CD8-positive, alpha-beta memory T cell (primary cell): ENCODE measurements at regions of chr22 and their contacts with region 1.

Region 1: GRCh38 chr22:17501679-17502285 is 61.5 kb upstream of the SLC25A18 start:
- DNase-seq: peak in 2 of 5 donors; percentile 47 to 61
- H3K4me3 ChIP-seq: no peak overlapping the region
- H3K4me3 Mint-ChIP-seq: no peak overlapping the region
- H3K27ac ChIP-seq: no peak overlapping the region
- H3K27ac Mint-ChIP-seq: no peak overlapping the region
- H3K4me1 ChIP-seq: no peaks in the 10 kb centered on the region
- H3K4me1 Mint-ChIP-seq: no peaks in the 10 kb centered on the region
- H3K27me3 ChIP-seq: no peaks in the 10 kb centered on the region
- H3K27me3 Mint-ChIP-seq: peaks cover 4 to 12% of the 10 kb centered on the region in 2 donors

Region 2: GRCh38 chr22:17077255-17077654 is 424.5 kb before region 1 on chr22:
- CTCF ChIA-PET with region 1: interaction called, 35 read pairs
- POLR2A ChIA-PET with region 1: no interaction called
- DNase-seq: no peak
- H3K4me3 ChIP-seq: no peak overlapping the region
- H3K4me3 Mint-ChIP-seq: no peak overlapping the region
- H3K27ac ChIP-seq: no peak overlapping the region
- H3K27ac Mint-ChIP-seq: no peak overlapping the region
- H3K4me1 ChIP-seq: peaks cover 7% of the 10 kb centered on the region
- H3K4me1 Mint-ChIP-seq: peaks cover 6 to 12% (median 12%) of the 10 kb centered on the region in 3 donors
- H3K27me3 ChIP-seq: no peaks in the 10 kb centered on the region
- H3K27me3 Mint-ChIP-seq: peaks cover 0 to 4% of the 10 kb centered on the region in 2 donors

Region 3: GRCh38 chr22:17213976-17214375 is 287.8 kb before region 1 on chr22:
- CTCF ChIA-PET with region 1: interaction called, 11 read pairs
- POLR2A ChIA-PET with region 1: no interaction called
- DNase-seq: peak in 3 of 5 donors; percentile 25 to 59 (median 46)
- H3K4me3 ChIP-seq: no peak overlapping the region
- H3K4me3 Mint-ChIP-seq: peak overlapping the region in 2 of 7 donors; percentile 7 to 19
- H3K27ac ChIP-seq: no peak overlapping the region
- H3K27ac Mint-ChIP-seq: peak overlapping the region in 6 of 8 donors; percentile 22 to 94 (median 62)
- H3K4me1 ChIP-seq: peaks cover 38% of the 10 kb centered on the region
- H3K4me1 Mint-ChIP-seq: peaks cover 45 to 63% (median 58%) of the 10 kb centered on the region in 3 donors
- H3K27me3 ChIP-seq: no peaks in the 10 kb centered on the region
- H3K27me3 Mint-ChIP-seq: no peaks in the 10 kb centered on the region